GM12878 (cell line): ENCODE measurements at regions of chr2 and their contacts with region 1.

Region 1: DNA sequence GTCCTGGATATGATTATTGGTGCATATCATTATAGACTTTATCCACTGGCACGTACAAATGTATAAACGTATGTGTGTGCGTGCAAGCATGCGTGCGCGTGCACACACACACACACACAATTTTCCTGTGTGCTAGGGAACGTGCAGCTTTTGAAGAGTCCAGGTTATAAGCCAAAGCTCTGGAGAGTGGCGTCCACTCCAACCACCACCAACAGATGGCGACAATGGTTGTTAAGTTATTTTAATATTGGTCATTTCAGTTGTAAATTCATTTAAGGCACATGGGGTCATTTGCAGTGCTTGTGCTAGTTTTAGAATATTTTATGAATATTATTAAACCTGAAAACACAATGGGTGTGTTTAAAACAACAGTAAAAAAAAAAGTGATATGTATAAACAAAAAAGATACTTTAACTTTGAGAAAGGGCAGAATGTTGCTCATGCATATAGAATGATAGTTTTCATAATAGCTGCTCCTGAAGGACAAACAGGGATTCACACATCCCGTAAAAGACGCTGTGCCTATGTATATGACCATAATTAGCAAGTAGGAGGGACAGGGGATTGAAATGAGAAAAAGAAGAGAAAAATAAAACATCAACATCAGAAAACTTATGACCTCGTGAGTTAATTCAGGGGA is 124.2 kb upstream of the ITGB6 start:
- DNase-seq: no peak
- ATAC-seq: peak; percentile 82
- H3K4me3 ChIP-seq: no peak overlapping the region
- H3K27ac ChIP-seq: no peak overlapping the region
- H3K4me1 ChIP-seq: no peaks in the 10 kb centered on the region
- H3K27me3 ChIP-seq: no peaks in the 10 kb centered on the region; a peak in 1 of 4 replicates
- CTCF ChIP-seq: peak; percentile 60 to 72 (median 63)
- EP300 ChIP-seq: no peak
- POLR2A ChIP-seq: no peak
- RAD21 ChIP-seq: peak; percentile 64

Region 2: GRCh38 chr2:160345071-160345764 is 20.9 kb after region 1 on chr2:
- CTCF ChIA-PET with region 1: interaction called, 11 read pairs
- POLR2A ChIA-PET with region 1: no interaction called
- RAD21 ChIA-PET with region 1: no interaction called
- SMC1A ChIA-PET with region 1: interaction called, 4 read pairs
- in situ Hi-C with region 1: no loop called
- intact Hi-C with region 1: no loop called
- DNase-seq: no peak
- ATAC-seq: no peak
- H3K4me3 ChIP-seq: no peak overlapping the region
- H3K27ac ChIP-seq: no peak overlapping the region
- H3K4me1 ChIP-seq: no peaks in the 10 kb centered on the region
- H3K27me3 ChIP-seq: 0 out of 4 replicates have a peak, but pooled peaks cover 0 to 2% of the 10 kb centered on the region in 2 experiments
- CTCF ChIP-seq: no peak
- EP300 ChIP-seq: no peak
- POLR2A ChIP-seq: no peak
- RAD21 ChIP-seq: no peak

Region 3: DNA sequence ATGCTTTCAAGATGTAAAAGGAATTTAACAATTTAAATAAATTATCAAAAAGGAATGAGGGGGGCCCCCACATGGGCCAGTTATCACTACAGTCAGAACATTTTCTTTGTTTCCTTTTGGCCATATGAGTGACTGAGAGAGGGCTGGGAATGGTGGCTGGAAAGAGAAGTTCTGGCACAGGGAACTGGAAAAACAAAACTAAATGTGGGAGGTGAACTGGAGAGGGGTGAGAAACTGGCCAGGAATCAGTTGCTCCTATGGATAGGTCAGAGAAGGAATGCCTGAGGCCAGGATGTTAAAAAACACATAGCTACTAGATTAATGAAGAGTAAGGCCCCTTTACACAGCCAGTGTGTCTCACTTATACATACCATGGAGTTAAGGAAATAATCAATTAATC is 48.3 kb after region 1 on chr2:
- CTCF ChIA-PET with region 1: no interaction called
- POLR2A ChIA-PET with region 1: no interaction called
- RAD21 ChIA-PET with region 1: no interaction called
- SMC1A ChIA-PET with region 1: no interaction called
- in situ Hi-C with region 1: no loop called
- intact Hi-C with region 1: no loop called
- DNase-seq: no peak
- ATAC-seq: no peak
- H3K4me3 ChIP-seq: no peak overlapping the region
- H3K27ac ChIP-seq: no peak overlapping the region
- H3K4me1 ChIP-seq: no peaks in the 10 kb centered on the region
- H3K27me3 ChIP-seq: peaks cover 0 to 2% of the 10 kb centered on the region in 2 experiments; a peak in 1 of 4 replicates
- CTCF ChIP-seq: no peak
- EP300 ChIP-seq: no peak
- POLR2A ChIP-seq: no peak
- RAD21 ChIP-seq: no peak

Region 4: GRCh38 chr2:160411167-160411566 is 86.9 kb after region 1 on chr2:
- CTCF ChIA-PET with region 1: no interaction called
- POLR2A ChIA-PET with region 1: no interaction called
- RAD21 ChIA-PET with region 1: no interaction called
- SMC1A ChIA-PET with region 1: no interaction called
- in situ Hi-C with region 1: no loop called
- intact Hi-C with region 1: no loop called
- DNase-seq: no peak
- ATAC-seq: no peak
- H3K4me3 ChIP-seq: no peak overlapping the region
- H3K27ac ChIP-seq: no peak overlapping the region
- H3K4me1 ChIP-seq: peaks cover 8% of the 10 kb centered on the region
- H3K27me3 ChIP-seq: peaks cover 0 to 8% of the 10 kb centered on the region in 2 experiments; a peak in 1 of 4 replicates
- CTCF ChIP-seq: no peak
- EP300 ChIP-seq: no peak
- POLR2A ChIP-seq: no peak
- RAD21 ChIP-seq: no peak

Region 5: GRCh38 chr2:160695402-160696086 is 371.3 kb after region 1 on chr2:
- CTCF ChIA-PET with region 1: no interaction called
- POLR2A ChIA-PET with region 1: no interaction called
- RAD21 ChIA-PET with region 1: no interaction called
- SMC1A ChIA-PET with region 1: no interaction called
- in situ Hi-C with region 1: no loop called
- intact Hi-C with region 1: no loop called
- DNase-seq: no peak
- ATAC-seq: no peak
- H3K4me3 ChIP-seq: no peak overlapping the region
- H3K27ac ChIP-seq: no peak overlapping the region
- H3K4me1 ChIP-seq: no peaks in the 10 kb centered on the region
- H3K27me3 ChIP-seq: no peaks in the 10 kb centered on the region
- CTCF ChIP-seq: no peak
- EP300 ChIP-seq: no peak
- POLR2A ChIP-seq: no peak
- RAD21 ChIP-seq: no peak